Activated naive CD4-positive, alpha-beta T cell treated with anti-CD3 and anti-CD28 coated beads for 36 hours (primary cell): ENCODE measurements at regions of chr3 and their contacts with region 1.

Region 1: GRCh38 chr3:184543843-184544512 is 17.6 kb upstream of the EPHB3 start:
- DNase-seq: peak; percentile 89
- H3K4me3 Mint-ChIP-seq: no peak overlapping the region
- H3K27ac Mint-ChIP-seq: no peak overlapping the region
- H3K4me1 Mint-ChIP-seq: peaks cover 8% of the 10 kb centered on the region
- H3K27me3 Mint-ChIP-seq: no peaks in the 10 kb centered on the region

Region 2: DNA sequence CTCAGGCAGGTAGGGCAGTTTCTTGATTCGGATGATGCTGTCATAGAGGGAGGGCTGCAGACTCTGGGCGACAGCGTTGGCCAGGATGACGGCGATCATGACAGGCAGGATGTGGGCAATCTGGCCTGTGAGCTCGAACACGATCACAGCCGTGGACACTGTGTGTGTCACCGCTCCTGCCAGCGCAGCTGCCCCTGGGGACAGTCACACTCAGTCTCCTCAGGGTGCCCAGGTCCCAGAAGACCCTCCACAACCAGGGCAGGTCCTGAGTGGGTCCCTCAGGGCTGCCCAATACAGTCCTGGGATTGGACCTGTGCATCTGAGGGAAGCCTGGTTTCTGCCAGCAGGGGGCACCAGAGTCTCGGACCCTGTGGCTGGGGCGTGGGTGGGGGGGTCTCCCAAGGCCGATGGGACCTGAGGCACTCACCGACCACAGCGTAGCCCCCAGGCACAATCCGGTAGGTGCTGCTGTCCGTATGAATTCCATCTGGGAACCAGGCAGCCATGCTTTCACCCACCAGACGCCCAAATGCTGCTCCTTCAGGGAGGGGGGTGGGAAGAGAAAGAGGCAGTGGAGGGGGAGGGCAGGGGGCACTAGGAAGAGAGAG is 189.8 kb before region 1 on chr3:
- CTCF ChIA-PET with region 1: interaction called, 12 read pairs
- intact Hi-C with region 1: loop called (anchors 1 kb)
- DNase-seq: peak; percentile 76
- H3K4me3 Mint-ChIP-seq: no peak overlapping the region
- H3K27ac Mint-ChIP-seq: no peak overlapping the region
- H3K4me1 Mint-ChIP-seq: no peaks in the 10 kb centered on the region
- H3K27me3 Mint-ChIP-seq: no peaks in the 10 kb centered on the region

Region 3: DNA sequence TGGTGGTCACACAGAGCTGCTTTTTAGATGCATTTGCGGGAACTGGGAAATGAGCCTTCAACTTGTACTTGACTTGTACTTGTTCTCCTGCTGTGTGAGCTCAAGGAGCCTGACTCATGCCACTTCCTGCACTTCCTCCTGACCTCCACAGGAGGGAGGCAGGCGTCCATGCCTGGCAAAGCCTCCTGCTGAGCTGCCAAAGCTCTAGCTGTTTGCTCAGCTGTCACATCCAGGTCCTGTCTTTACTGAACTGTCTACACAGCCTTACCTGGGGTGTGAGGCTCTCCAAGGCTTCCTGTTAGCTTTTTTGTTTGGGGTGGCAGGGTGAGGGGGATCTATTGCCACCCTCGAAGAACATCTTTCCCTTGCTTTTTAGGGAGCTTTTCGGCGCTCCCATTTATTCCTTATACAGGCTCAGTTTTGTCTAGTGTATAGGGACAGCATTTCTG is 172.4 kb before region 1 on chr3:
- CTCF ChIA-PET with region 1: interaction called, 81 read pairs
- intact Hi-C with region 1: loop called (anchors 1 kb)
- DNase-seq: peak; percentile 80
- H3K4me3 Mint-ChIP-seq: no peak overlapping the region
- H3K27ac Mint-ChIP-seq: no peak overlapping the region
- H3K4me1 Mint-ChIP-seq: peaks cover 16% of the 10 kb centered on the region
- H3K27me3 Mint-ChIP-seq: no peaks in the 10 kb centered on the region

Region 4: DNA sequence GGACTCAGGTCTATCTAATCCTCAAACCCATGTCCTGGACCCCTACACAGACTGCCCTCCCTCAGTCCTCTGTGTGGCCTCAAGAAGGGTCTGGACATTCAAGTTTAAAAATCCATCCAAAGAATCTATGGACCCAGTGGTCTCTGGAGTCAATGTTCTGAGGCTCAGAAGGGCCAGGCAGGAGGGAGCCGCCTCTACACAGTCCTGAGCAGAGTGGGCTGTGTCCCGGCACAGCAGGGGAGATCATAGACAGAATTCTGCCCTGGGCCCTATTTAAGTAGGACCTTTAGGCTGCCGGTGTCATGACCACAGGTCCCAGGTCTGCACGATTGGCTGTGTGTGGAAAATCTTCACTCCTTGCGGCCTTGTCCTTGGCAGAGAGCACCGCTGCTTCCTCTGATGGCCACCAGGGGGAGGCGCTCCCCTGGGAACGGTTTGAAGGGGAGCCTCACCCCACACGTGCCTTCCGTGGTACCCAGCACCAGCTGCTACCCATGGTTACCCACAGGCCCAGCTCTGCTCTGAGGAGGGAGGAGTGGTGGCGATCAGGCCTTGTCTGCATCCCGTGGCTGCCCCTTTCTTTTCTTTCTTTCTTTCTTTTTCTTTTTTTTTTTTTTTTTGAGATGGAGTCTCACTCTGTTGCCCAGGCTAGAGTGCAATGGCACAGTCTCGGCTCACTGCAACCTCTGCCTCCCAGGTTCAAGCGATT is 126.2 kb before region 1 on chr3:
- CTCF ChIA-PET with region 1: interaction called, 20 read pairs
- intact Hi-C with region 1: loop called (anchors 1 kb)
- DNase-seq: peak; percentile 78
- H3K4me3 Mint-ChIP-seq: no peak overlapping the region
- H3K27ac Mint-ChIP-seq: no peak overlapping the region
- H3K4me1 Mint-ChIP-seq: no peaks in the 10 kb centered on the region
- H3K27me3 Mint-ChIP-seq: no peaks in the 10 kb centered on the region

Region 5: GRCh38 chr3:184469423-184469822 is 74.6 kb before region 1 on chr3:
- CTCF ChIA-PET with region 1: interaction called, 15 read pairs
- intact Hi-C with region 1: loop called (anchors 1 kb)
- DNase-seq: peak; percentile 68
- H3K4me3 Mint-ChIP-seq: no peak overlapping the region
- H3K27ac Mint-ChIP-seq: no peak overlapping the region
- H3K4me1 Mint-ChIP-seq: peaks cover 20% of the 10 kb centered on the region
- H3K27me3 Mint-ChIP-seq: peaks cover 11% of the 10 kb centered on the region

Region 6: DNA sequence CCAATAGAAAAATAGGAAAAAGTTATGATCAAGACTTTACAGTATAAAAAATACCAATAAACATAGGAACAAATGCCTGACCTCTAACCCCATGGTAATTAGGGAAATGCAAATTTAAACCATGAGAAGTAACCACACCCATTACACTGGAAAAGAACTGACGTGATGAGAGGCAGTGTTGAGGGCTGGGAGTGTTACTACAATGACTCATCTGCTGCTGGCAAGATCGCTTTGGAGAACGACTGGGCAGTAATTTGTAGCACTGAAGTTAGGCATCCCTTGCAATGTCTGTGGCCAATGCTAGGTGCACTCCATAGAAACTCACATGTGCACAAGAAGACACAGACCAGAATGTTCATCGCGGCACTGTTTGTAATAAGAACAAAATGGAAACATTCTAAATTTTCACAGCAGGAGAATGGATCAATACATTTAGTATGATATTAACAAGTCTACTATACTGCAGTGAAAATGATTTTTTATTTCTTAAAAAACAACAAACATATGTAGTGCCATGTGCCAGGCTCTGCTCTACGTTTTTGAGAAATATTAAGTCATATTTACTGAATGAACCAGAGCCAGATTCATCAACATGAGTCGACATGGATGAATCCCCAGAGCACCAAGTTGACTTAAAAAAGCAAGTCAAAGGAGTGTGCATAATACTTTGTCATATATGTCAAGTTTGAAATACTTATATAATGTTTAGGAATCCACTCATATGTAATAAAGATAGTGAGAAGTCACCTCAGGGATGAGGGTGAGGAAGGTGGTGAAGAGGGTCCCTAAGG is 20.0 kb before region 1 on chr3:
- CTCF ChIA-PET with region 1: interaction called, 7 read pairs
- intact Hi-C with region 1: loop called (anchors 1 kb)
- DNase-seq: peak; percentile 45
- H3K4me3 Mint-ChIP-seq: no peak overlapping the region
- H3K27ac Mint-ChIP-seq: peak overlapping the region; percentile 60
- H3K4me1 Mint-ChIP-seq: peaks cover 11% of the 10 kb centered on the region
- H3K27me3 Mint-ChIP-seq: peaks cover 4% of the 10 kb centered on the region

Region 7: GRCh38 chr3:184777336-184778004 is 233.5 kb after region 1 on chr3:
- CTCF ChIA-PET with region 1: interaction called, 7 read pairs
- intact Hi-C with region 1: loop called (anchors 1 kb)
- DNase-seq: peak; percentile 94
- H3K4me3 Mint-ChIP-seq: no peak overlapping the region
- H3K27ac Mint-ChIP-seq: no peak overlapping the region
- H3K4me1 Mint-ChIP-seq: no peaks in the 10 kb centered on the region
- H3K27me3 Mint-ChIP-seq: peaks cover 7% of the 10 kb centered on the region